MCF 10A (cell line): ENCODE measurements at regions of chr1 and their contacts with region 1.

Region 1: DNA sequence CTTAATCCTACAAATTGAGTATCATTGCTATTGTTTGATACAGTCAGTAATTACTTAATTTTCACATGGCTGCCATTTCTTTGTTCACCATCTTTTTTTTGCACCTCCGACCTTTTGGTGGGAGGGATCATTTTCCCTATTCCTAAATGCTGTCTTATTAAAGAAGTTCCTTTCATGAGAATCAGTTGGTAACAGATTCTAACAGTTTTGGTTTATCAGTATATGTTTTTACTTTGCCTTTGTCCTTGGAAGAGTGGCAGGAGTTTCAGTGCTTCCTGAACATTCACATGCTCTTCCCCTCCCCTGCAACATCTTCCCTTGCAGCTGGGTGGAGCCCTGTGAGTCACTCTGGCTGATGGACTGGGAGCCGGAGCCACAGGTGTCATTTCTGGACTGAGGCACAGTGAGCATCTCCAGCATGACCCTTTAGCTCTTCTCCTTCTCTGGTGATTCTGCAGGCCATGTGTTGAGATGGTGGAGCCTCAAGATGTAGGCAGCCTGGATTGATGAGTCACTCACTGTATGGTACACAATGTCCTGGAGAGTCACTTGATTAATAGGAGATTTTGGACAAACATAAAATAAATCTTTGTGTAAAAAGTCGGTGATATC is 217.7 kb downstream of the URB2 start:
- DNase-seq: peak; percentile 91
- H3K4me3 Mint-ChIP-seq: peak overlapping the region; percentile 5
- H3K27ac Mint-ChIP-seq: peak overlapping the region; percentile 58
- H3K4me1 Mint-ChIP-seq: peaks cover 37% of the 10 kb centered on the region
- H3K27me3 Mint-ChIP-seq: no peaks in the 10 kb centered on the region
- CTCF ChIP-seq: no peak

Region 2: DNA sequence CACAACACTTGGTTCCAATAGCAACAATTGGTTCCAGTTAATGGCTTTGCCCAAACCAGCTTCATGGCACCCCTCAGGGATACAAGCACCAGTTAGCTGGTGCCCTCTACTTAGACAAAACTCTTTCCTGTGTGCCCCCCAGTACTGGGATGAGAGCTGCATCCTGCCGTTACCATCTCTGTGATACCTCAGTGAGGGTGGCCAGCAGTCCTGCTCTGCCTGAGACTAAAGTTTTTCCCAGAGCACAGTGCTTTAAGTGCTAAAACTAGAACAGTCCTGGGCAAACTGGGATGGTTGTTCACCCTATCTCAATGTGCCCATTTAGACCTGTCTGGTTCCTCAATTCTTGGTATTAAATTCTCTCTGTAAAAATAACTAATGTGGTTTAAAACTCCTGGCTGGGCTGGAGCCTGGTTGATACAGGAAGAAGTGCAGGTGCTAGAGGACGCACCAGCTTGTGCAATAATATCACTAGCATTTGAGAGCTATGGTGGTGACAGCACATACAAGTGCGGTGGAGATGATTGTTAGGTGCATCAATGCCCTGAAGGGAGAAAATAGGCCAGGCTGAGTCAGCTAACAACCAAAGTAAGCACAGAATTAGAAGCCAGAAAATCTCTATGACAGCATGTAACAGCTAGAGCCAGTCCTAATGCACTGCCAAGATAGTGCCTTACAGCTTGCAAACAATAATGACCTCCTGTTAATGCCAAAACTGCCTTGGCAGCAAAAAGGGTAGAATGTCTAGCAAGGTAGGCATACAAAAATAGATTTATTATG is 43.5 kb after region 1 on chr1:
- CTCF ChIA-PET with region 1: interaction called, 6 read pairs
- POLR2A ChIA-PET with region 1: interaction called, 7 read pairs
- intact Hi-C with region 1: loop called (anchors 2 kb)
- DNase-seq: peak; percentile 97
- H3K4me3 Mint-ChIP-seq: no peak overlapping the region
- H3K27ac Mint-ChIP-seq: peak overlapping the region; percentile 71
- H3K4me1 Mint-ChIP-seq: peaks cover 30% of the 10 kb centered on the region
- H3K27me3 Mint-ChIP-seq: peaks cover 8% of the 10 kb centered on the region
- CTCF ChIP-seq: no peak

Region 3: GRCh38 chr1:230167419-230167852 is 323.7 kb after region 1 on chr1:
- CTCF ChIA-PET with region 1: interaction called, 5 read pairs
- POLR2A ChIA-PET with region 1: no interaction called
- intact Hi-C with region 1: loop called (anchors 5 kb)
- DNase-seq: peak; percentile 77
- H3K4me3 Mint-ChIP-seq: no peak overlapping the region
- H3K27ac Mint-ChIP-seq: no peak overlapping the region
- H3K4me1 Mint-ChIP-seq: peaks cover 29% of the 10 kb centered on the region
- H3K27me3 Mint-ChIP-seq: no peaks in the 10 kb centered on the region
- CTCF ChIP-seq: peak; percentile 89